ENCODE measurements at regions of chr6 and their contacts with region 1.

Region 1: DNA sequence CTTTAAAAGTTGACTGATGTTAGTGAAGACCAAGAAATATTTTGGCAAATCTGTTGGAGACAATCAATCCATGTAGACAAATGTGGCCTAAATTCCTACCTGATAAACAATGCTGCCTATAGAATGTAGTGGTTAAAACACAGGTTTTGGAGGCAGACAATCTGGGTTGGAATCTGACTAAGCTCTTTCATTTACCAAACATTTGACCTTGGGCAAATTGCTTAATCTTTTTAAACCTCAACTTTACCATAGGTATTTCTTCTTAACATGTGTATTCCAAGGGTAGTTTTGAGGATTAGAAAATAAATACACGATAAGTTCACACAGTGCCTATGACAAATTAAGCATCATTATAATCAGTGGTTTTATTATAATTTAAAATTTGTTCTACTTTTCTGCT is 11.5 kb downstream of the RHAG start:
- DNase-seq: no peak

Region 2: GRCh38 chr6:49849213-49849907 is 224.2 kb after region 1 on chr6:
- intact Hi-C with region 1: loop called (anchors 10 kb)
- DNase-seq: peak in 4 of 42 donors; percentile 0 to 17 (median 6)

Region 3: GRCh38 chr6:50427267-50427666 is 802.1 kb after region 1 on chr6:
- intact Hi-C with region 1: no loop called
- DNase-seq: no peak

Measured in head of caudate nucleus (tissue), 42 donors.